Caco-2 (cell line): ENCODE measurements at regions of chr5 and their contacts with region 1.

Region 1: DNA sequence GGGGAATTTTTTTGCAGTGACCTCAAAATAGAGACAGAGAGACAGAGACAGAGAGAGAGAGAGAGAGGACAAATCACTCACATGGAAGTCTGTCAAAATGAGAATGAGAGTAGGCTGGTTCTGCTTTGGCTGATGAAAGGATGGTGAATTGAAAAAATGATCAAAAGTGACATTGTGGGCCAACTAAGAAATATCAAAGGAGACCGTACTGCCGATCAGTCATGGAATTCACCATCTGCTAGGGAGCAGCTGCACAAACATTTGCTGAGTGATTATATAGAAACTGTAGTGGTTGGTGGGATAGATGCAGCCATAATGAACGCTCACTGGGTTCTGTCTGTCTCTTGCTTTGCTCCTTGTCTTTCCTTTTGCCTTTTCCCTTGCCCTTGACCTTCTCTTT is 476.6 kb upstream of the SGCD start:
- DNase-seq: no peak
- H3K4me3 ChIP-seq: no peak overlapping the region
- H3K4me3 Mint-ChIP-seq: no peak overlapping the region
- H3K27ac Mint-ChIP-seq: no peak overlapping the region
- H3K4me1 ChIP-seq: no peaks in the 10 kb centered on the region
- H3K4me1 Mint-ChIP-seq: no peaks in the 10 kb centered on the region
- H3K27me3 ChIP-seq: no peaks in the 10 kb centered on the region
- H3K27me3 Mint-ChIP-seq: no peaks in the 10 kb centered on the region
- CTCF ChIP-seq: no peak

Region 2: DNA sequence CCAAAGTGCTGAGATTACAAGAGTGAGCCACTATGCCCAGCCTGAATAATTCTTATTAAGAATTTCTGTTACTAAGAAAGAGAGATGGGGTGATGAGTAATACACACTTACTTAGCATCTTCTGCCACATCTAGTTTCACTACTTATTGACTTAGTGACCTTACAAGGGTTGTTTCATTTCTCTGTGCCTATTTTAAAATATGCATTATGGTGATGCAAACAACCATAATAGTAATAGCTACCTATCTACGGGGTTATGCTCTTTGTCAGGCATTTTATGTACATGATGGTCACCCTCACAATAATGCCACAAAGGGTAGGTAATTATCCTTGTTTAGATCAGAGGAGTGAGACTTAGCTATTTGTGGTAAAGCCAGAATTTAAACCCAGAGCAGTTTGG is 22.4 kb before region 1 on chr5:
- CTCF ChIA-PET with region 1: no interaction called
- POLR2A ChIA-PET with region 1: no interaction called
- intact Hi-C with region 1: no loop called
- DNase-seq: no peak
- H3K4me3 ChIP-seq: no peak overlapping the region
- H3K4me3 Mint-ChIP-seq: no peak overlapping the region
- H3K27ac Mint-ChIP-seq: no peak overlapping the region
- H3K4me1 ChIP-seq: no peaks in the 10 kb centered on the region
- H3K4me1 Mint-ChIP-seq: no peaks in the 10 kb centered on the region
- H3K27me3 ChIP-seq: no peaks in the 10 kb centered on the region
- H3K27me3 Mint-ChIP-seq: peaks cover 9% of the 10 kb centered on the region
- CTCF ChIP-seq: no peak

Region 3: GRCh38 chr5:155895484-155895883 is 45.1 kb after region 1 on chr5:
- CTCF ChIA-PET with region 1: no interaction called
- POLR2A ChIA-PET with region 1: no interaction called
- intact Hi-C with region 1: no loop called
- DNase-seq: no peak
- H3K4me3 ChIP-seq: no peak overlapping the region
- H3K4me3 Mint-ChIP-seq: no peak overlapping the region
- H3K27ac Mint-ChIP-seq: no peak overlapping the region
- H3K4me1 ChIP-seq: no peaks in the 10 kb centered on the region
- H3K4me1 Mint-ChIP-seq: no peaks in the 10 kb centered on the region
- H3K27me3 ChIP-seq: no peaks in the 10 kb centered on the region
- H3K27me3 Mint-ChIP-seq: peaks cover 2% of the 10 kb centered on the region
- CTCF ChIP-seq: no peak

Region 4: DNA sequence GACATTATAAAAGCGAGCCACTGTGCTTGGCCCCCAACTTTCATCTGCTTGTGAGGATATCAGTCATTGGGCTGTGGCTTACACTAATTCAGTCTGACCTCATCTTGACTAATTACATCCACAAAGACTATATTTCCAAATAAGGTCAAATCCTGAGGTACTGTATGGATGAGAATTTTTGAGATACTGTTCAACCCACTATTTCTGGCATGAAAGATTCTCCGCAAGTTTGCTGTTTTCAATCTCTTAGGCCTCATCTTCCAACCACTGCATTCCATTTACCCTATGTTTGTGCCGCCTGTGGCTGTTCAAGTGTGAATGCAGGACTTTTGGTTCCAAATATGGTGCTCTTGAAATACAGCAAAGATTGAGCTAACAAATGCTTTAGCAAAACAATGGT is 75.7 kb after region 1 on chr5:
- CTCF ChIA-PET with region 1: no interaction called
- POLR2A ChIA-PET with region 1: no interaction called
- intact Hi-C with region 1: no loop called
- DNase-seq: no peak
- H3K4me3 ChIP-seq: no peak overlapping the region
- H3K4me3 Mint-ChIP-seq: no peak overlapping the region
- H3K27ac Mint-ChIP-seq: no peak overlapping the region
- H3K4me1 ChIP-seq: no peaks in the 10 kb centered on the region
- H3K4me1 Mint-ChIP-seq: peaks cover 6% of the 10 kb centered on the region
- H3K27me3 ChIP-seq: no peaks in the 10 kb centered on the region
- H3K27me3 Mint-ChIP-seq: peaks cover 10% of the 10 kb centered on the region
- CTCF ChIP-seq: no peak

Region 5: DNA sequence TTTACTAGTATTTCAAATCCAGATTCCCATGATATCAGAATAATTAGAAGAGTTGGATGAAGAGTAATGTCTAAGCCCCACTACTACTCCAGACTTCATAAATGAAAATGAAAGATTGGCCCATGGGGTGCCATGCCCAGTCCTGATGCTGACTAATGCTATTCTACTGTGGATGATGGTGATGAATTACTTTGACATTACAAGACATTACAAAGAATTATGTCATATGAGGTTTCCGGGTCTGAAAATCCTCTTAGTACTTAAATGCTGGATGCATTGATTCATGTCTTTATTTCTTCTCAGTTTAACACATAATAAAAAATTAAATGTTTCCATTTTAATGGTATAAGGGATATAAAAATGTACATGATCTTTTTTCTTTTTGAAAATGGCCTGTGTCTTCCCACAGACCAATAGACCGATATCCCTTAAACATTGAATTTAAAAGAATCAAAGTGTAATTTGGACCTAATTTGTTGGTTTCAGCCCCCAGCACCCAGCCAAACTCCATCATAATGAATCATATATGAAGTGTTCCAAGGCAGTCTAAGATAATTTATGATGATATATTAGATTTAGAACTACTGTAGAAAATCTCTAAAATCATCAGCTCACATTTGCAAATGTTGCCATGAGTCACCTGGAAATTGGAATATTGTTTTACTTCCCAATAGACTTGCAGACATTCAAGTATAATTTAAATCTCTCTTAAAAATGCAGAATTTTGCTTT is 252.9 kb after region 1 on chr5:
- CTCF ChIA-PET with region 1: interaction called, 10 read pairs
- POLR2A ChIA-PET with region 1: no interaction called
- intact Hi-C with region 1: no loop called
- DNase-seq: no peak
- H3K4me3 ChIP-seq: no peak overlapping the region
- H3K4me3 Mint-ChIP-seq: no peak overlapping the region
- H3K27ac Mint-ChIP-seq: no peak overlapping the region
- H3K4me1 ChIP-seq: no peaks in the 10 kb centered on the region
- H3K4me1 Mint-ChIP-seq: no peaks in the 10 kb centered on the region
- H3K27me3 ChIP-seq: no peaks in the 10 kb centered on the region
- H3K27me3 Mint-ChIP-seq: no peaks in the 10 kb centered on the region
- CTCF ChIP-seq: no peak